ENCODE measurements at regions of chr5 and their contacts with region 1.

Region 1: DNA sequence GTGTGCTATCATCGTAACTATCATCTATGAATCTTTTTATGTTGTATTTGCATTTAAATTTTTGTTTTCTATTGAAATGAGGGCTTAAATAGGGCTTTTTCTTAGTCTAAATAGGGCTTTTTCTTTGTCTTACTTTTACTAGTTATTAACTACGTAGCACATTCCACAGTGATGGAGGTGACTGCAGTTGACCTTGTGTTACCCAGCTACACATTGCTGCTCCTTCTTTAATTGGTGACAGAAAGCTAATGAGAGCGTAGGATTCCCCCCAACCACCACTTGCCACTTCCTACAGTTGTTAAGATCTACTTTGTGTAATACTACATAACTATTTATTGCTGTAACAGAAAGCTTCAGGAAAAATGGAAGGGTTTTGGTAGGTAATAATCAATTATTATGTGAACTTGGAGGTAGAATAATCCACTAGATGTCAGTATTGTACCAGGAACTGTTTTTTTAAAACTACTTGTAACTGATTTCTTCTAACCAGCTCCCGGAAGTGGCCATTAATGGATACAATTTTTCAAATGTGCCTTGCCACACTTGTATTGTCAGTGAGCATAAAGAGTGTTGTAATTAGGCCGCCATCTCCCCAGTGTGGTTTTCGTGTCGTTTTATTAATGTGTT is 18.0 kb downstream of the MTRR start:
- DNase-seq: no peak
- ATAC-seq: no peak
- H3K4me3 Mint-ChIP-seq: no peak overlapping the region
- H3K27ac Mint-ChIP-seq: no peak overlapping the region
- H3K4me1 Mint-ChIP-seq: peaks cover 3% of the 10 kb centered on the region
- H3K27me3 Mint-ChIP-seq: no peaks in the 10 kb centered on the region

Region 2: GRCh38 chr5:7868773-7869473 is 18.0 kb before region 1 on chr5 and contains the starts of genes FASTKD3 and MTRR:
- CTCF ChIA-PET with region 1: interaction called, 37 read pairs
- POLR2A ChIA-PET with region 1: interaction called, 3 read pairs
- DNase-seq: peak; percentile 94
- ATAC-seq: peak; percentile 100
- H3K4me3 Mint-ChIP-seq: peak within 1 kb of the TSS; percentile 92
- H3K27ac Mint-ChIP-seq: peak within 1 kb of the TSS; percentile 87
- H3K4me1 Mint-ChIP-seq: peaks cover 63% of the 10 kb centered on the region
- H3K27me3 Mint-ChIP-seq: no peaks in the 10 kb centered on the region
- total RNA-seq, gene FASTKD3: 10.8 to 13.8 TPM
- total RNA-seq, gene MTRR: 39.1 to 49.7 TPM

Region 3: GRCh38 chr5:7897014-7897632 is 10.2 kb after region 1 on chr5:
- CTCF ChIA-PET with region 1: interaction called, 23 read pairs
- POLR2A ChIA-PET with region 1: no interaction called
- DNase-seq: peak; percentile 30
- ATAC-seq: no peak
- H3K4me3 Mint-ChIP-seq: no peak overlapping the region
- H3K27ac Mint-ChIP-seq: no peak overlapping the region
- H3K4me1 Mint-ChIP-seq: peaks cover 9% of the 10 kb centered on the region
- H3K27me3 Mint-ChIP-seq: no peaks in the 10 kb centered on the region